ENCODE measurements at regions of chr7 and their contacts with region 1.

Region 1: DNA sequence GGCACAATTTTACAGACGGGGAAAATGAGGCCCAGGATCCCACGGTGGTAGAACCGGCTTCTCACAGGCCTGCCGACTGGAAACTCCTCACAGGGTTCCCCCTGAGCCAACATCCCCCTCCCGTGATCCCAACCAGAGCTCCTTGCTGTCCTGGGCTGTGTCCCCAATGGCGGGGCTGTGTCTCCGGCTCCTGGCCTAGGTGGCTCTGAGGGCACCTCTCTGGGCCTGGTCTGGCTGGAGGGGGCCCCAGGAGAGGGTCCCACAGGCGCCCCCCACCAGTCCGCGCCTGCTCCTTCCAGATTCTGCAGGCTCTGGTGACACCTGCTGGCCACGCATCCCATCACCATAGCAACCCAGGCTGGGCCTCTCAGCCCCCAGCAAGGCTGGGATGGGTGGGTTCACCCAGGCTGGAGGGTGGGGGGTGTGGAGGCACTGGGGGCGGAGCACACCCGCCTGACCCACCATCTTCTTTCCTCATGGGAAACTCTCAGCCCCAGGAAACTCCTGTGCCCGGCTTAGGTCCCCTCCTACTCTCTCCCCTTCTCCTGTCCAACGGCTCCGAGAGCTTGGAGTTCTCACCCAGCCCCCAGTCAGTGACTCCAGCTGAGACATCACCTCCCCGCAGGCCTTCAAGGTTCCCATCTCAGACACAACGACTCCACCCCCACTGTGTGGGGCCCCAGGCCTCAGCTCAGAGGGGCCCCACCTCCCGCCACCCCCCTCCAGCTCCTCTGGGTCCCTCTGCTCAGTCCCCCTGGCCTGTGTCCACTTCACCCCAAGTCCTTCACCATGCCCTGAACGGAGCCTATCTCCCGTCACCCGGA is 27.1 kb upstream of the TNRC18 start:
- DNase-seq: peak in 1 of 2 experiments; percentile 89
- H3K4me3 ChIP-seq: no peak overlapping the region
- H3K27ac ChIP-seq: no peak overlapping the region
- H3K4me1 ChIP-seq: peaks cover 0 to 8% (median 2%) of the 10 kb centered on the region in 4 experiments; a peak in 5 of 7 replicates
- H3K27me3 ChIP-seq: no peaks in the 10 kb centered on the region
- CTCF ChIP-seq: peak; percentile 69 to 75 (median 73)
- EP300 ChIP-seq: no peak
- POLR2A ChIP-seq: no peak
- RAD21 ChIP-seq: peak; percentile 86 to 94

Region 2: GRCh38 chr7:5397736-5398135 is 53.0 kb before region 1 on chr7:
- CTCF ChIA-PET with region 1: interaction called, 15 read pairs
- POLR2A ChIA-PET with region 1: no interaction called
- DNase-seq: no peak
- H3K4me3 ChIP-seq: no peak overlapping the region
- H3K27ac ChIP-seq: no peak overlapping the region
- H3K4me1 ChIP-seq: no peaks in the 10 kb centered on the region
- H3K27me3 ChIP-seq: no peaks in the 10 kb centered on the region
- CTCF ChIP-seq: no peak
- EP300 ChIP-seq: no peak
- POLR2A ChIP-seq: no peak
- RAD21 ChIP-seq: no peak

Region 3: GRCh38 chr7:5423844-5424688 is 26.7 kb before region 1 on chr7:
- CTCF ChIA-PET with region 1: interaction called, 11 read pairs
- POLR2A ChIA-PET with region 1: interaction called, 9 read pairs
- DNase-seq: peak; percentile 82 to 90
- H3K4me3 ChIP-seq: peak overlapping the region; percentile 57 to 78 (median 68)
- H3K27ac ChIP-seq: no peak overlapping the region
- H3K4me1 ChIP-seq: peaks cover 0 to 47% (median 17%) of the 10 kb centered on the region in 4 experiments; a peak in 5 of 7 replicates
- H3K27me3 ChIP-seq: peaks cover 33 to 77% (median 66%) of the 10 kb centered on the region in 4 experiments; a peak in 6 of 7 replicates
- CTCF ChIP-seq: no peak
- EP300 ChIP-seq: peak in 1 of 2 experiments; percentile 50; a peak in 1 of 3 replicates
- POLR2A ChIP-seq: no peak; a peak in 1 of 3 replicates
- RAD21 ChIP-seq: no peak

Region 4: DNA sequence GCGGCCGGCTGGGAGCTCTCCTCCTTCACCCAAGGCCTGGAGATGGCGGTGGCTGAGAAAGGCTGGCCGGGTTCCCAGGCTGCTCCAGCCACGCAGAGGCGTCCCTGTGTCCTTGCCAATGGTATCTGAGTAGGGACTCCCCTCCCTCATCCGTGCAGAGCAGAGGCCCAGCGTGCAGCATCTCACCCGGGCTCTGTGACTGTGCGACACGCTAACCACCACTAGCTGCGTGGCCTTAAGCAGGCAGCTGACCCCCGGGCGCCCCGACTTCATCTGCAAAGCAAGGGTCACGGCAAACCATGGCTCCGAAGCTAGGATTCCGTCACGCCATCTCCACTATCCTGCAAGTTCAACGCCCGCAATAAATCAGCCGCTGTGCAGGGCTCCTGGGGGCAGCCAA is 20.1 kb after region 1 on chr7:
- CTCF ChIA-PET with region 1: interaction called, 21 read pairs
- POLR2A ChIA-PET with region 1: no interaction called
- DNase-seq: no peak
- H3K4me3 ChIP-seq: no peak overlapping the region
- H3K27ac ChIP-seq: no peak overlapping the region; the same call in 1 of the 2 replicates
- H3K4me1 ChIP-seq: no peaks in the 10 kb centered on the region
- H3K27me3 ChIP-seq: no peaks in the 10 kb centered on the region
- CTCF ChIP-seq: no peak
- EP300 ChIP-seq: no peak
- POLR2A ChIP-seq: no peak
- RAD21 ChIP-seq: no peak